ENCODE measurements at regions of chr12 and their contacts with region 1.

Region 1: GRCh38 chr12:50038336-50038735 is 13.0 kb upstream of the RACGAP1 start:
- DNase-seq: no peak
- ATAC-seq: no peak
- H3K4me3 Mint-ChIP-seq: no peak overlapping the region
- H3K27ac Mint-ChIP-seq: no peak overlapping the region
- H3K4me1 Mint-ChIP-seq: peaks cover 4% of the 10 kb centered on the region
- H3K27me3 Mint-ChIP-seq: peaks cover 7% of the 10 kb centered on the region; the same call in 1 of the 2 replicates
- CTCF ChIP-seq: no peak

Region 2: GRCh38 chr12:49974231-49974675 is 64.1 kb before region 1 on chr12:
- CTCF ChIA-PET with region 1: interaction called, 64 read pairs
- POLR2A ChIA-PET with region 1: no interaction called
- DNase-seq: no peak
- ATAC-seq: peak; percentile 71
- H3K4me3 Mint-ChIP-seq: no peak overlapping the region
- H3K27ac Mint-ChIP-seq: no peak overlapping the region
- H3K4me1 Mint-ChIP-seq: peaks cover 13% of the 10 kb centered on the region
- H3K27me3 Mint-ChIP-seq: no peaks in the 10 kb centered on the region
- CTCF ChIP-seq: no peak

Region 3: DNA sequence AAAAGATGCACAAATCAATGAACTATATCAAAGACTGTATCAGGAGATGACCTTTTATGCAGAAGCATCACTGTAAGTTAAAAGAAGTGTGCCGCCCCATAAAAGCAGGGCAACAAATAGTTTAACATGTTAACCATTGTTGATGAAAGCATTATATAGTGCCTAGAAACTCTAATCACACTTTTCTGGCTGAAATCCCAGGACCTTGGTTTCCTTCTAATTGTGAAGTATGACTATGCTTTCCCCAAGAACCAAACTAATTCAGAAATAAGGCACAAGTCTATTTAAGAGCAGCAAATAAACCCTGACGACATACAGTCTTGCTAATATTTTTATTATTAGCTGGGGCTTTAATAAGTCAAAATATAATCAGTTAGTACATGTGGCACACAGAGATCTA is 34.7 kb before region 1 on chr12:
- CTCF ChIA-PET with region 1: no interaction called
- POLR2A ChIA-PET with region 1: no interaction called
- DNase-seq: no peak
- ATAC-seq: no peak
- H3K4me3 Mint-ChIP-seq: no peak overlapping the region
- H3K27ac Mint-ChIP-seq: no peak overlapping the region
- H3K4me1 Mint-ChIP-seq: no peaks in the 10 kb centered on the region
- H3K27me3 Mint-ChIP-seq: no peaks in the 10 kb centered on the region
- CTCF ChIP-seq: no peak

Region 4: DNA sequence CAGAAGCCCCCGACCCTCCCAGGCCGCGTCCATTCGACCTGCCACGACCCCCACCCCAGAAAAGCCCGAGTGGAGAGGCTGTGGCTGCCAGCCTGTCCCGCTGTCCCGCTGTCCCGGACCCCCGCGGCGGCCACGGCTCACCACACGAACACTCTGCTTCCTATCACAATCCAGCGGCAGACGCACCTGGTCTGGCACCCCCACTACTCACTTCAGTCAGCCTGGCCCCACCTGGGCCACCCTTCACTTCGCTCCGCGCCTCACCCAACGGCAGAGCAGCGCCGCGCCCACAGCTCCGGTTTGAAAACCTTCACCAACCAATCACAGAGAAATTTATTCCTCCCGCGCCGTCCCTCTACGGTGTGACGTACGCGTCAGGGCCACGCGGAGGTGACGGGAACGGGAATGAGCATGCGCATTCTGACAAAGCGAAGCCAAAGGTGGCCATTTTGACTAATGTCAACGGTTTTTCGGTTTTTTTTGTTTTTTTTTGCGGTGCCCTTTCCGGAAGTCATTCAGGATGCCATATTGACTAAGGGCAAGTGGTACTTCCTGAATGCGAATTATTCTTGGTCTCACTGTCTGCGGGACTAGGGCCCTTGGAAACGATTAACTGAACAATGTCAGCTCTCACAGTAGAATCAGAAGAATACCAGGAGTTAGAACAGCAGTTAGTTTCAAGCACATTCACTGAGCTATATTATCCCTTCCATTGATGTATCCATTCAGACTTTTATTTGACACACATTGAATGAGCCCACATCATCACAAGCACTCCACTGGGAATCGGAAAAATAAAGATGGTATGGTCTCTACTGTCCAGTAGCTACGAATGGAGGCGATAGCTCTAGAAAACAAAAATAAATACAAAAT is 12.9 kb before region 1 on chr12 and contains the start of gene RACGAP1:
- CTCF ChIA-PET with region 1: interaction called, 20 read pairs
- POLR2A ChIA-PET with region 1: interaction called, 8 read pairs
- DNase-seq: peak; percentile 95
- ATAC-seq: peak; percentile 99
- H3K4me3 Mint-ChIP-seq: peak within 1 kb of the TSS; percentile 95
- H3K27ac Mint-ChIP-seq: peak within 1 kb of the TSS; percentile 97
- H3K4me1 Mint-ChIP-seq: peaks cover 9% of the 10 kb centered on the region
- H3K27me3 Mint-ChIP-seq: no peaks in the 10 kb centered on the region
- CTCF ChIP-seq: no peak
- total RNA-seq, gene RACGAP1: 76.6 to 87.7 TPM (median 77.3 TPM) in 3 replicates

Region 5: DNA sequence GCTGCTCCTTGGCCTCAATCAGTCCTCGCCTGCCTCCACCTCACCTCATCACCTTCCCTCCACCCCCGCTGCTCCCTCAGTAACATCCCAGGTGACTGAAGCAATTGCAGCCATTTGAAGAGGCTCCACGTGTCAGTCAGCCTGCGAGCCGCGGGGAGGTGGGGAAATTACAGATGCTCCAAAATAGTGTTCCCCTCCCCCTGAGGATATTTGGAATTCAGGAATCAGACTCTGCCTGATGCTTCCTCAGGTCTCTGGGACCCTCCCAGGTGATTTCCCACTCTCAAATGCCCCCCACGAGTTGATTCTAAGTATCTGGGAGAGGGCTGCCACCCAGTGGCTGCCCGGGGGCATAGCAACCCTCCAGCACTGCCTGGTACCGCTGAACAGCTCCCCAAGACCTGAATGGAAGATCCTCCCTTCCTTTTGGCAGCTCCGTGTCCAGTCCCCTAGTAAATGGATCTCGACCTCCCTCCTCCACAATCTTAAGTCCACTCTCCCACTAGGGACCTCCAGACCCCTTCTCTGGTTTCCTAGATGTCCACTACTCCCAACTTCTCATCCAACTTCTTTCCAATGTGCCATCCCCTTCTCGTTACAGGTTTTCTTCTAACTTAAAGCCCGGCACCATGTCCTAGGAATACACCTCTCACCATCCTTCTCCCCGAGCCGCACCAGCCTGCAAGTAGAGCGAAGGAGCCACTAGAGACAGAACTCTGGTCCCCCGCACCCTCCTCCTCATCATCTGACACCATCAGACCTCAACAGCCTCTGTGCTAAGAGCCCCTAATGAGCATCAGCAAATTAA is 17.7 kb after region 1 on chr12:
- CTCF ChIA-PET with region 1: interaction called, 120 read pairs
- POLR2A ChIA-PET with region 1: interaction called, 3 read pairs
- DNase-seq: peak; percentile 72
- ATAC-seq: peak; percentile 46
- H3K4me3 Mint-ChIP-seq: peak overlapping the region; percentile 79
- H3K27ac Mint-ChIP-seq: no peak overlapping the region
- H3K4me1 Mint-ChIP-seq: peaks cover 25% of the 10 kb centered on the region
- H3K27me3 Mint-ChIP-seq: peaks cover 95% of the 10 kb centered on the region
- CTCF ChIP-seq: peak; percentile 94

Region 6: GRCh38 chr12:50167041-50167828 is 128.9 kb after region 1 on chr12 and contains the start of gene CERS5:
- CTCF ChIA-PET with region 1: interaction called, 10 read pairs
- POLR2A ChIA-PET with region 1: no interaction called
- DNase-seq: peak; percentile 99
- ATAC-seq: peak; percentile 95
- H3K4me3 Mint-ChIP-seq: peak within 1 kb of the TSS; percentile 87
- H3K27ac Mint-ChIP-seq: peak within 1 kb of the TSS; percentile 100
- H3K4me1 Mint-ChIP-seq: peaks cover 30% of the 10 kb centered on the region
- H3K27me3 Mint-ChIP-seq: no peaks in the 10 kb centered on the region
- CTCF ChIP-seq: 0 out of 2 replicates have a peak, but pooled peaks have one; percentile 23
- total RNA-seq, gene CERS5: 47.8 to 55.8 TPM (median 51.7 TPM) in 3 replicates

Measured in WTC11 (cell line).